PC-9 (cell line): ENCODE measurements at regions of chr13 and their contacts with region 1.

Region 1: DNA sequence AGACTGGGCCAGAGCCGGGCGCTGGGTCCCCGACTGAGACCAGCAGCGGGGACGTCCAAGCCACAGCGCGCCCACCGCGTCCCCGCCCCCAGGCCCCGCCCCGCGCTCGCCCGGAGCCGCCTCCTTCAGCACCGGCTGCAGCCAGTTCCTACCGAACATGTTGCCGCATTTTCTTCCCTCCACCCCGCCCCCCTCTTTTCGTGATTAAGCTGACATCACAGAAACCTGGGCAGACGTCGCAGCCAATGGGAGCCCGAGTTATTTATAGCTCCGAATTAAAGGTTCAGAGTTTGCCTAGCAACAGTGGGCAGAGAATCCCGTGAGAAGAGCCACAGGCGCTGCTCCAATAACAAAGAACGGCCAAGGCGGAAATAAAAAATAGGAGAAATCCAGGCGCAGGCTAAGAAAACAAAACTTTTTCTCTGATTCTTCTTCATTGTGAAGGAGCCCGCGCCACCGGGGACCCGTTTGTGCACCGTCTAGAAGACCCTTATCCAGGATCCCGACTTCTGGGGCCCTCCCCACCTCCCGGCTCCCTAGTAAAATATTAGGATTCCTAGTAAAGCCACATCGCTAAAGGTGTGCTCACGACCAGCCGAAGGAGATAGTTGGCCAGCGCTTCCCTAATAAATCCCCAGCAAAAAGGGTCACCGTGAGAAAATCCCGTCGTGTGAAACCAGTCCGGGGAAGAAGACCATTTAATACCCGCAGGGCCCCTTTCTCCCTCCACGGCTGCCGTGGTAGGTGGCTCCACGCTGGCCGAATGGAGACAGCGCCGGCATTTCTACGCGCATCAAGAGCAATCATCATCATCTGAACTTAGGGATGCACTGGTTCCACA is 61.7 kb downstream of the SERP2 start:
- DNase-seq: peak; percentile 87 to 90
- H3K4me3 ChIP-seq: peak overlapping the region; percentile 86
- H3K27ac ChIP-seq: peak overlapping the region; percentile 93
- H3K4me1 ChIP-seq: peaks cover 33% of the 10 kb centered on the region
- H3K27me3 ChIP-seq: no peaks in the 10 kb centered on the region
- CTCF ChIP-seq: no peak

Region 2: GRCh38 chr13:43905435-43906031 is 529.8 kb before region 1 on chr13:
- CTCF ChIA-PET with region 1: interaction called, 7 read pairs
- POLR2A ChIA-PET with region 1: no interaction called
- intact Hi-C with region 1: loop called (anchors 1 kb)
- DNase-seq: peak; percentile 9 to 62
- H3K4me3 ChIP-seq: no peak overlapping the region
- H3K27ac ChIP-seq: no peak overlapping the region
- H3K4me1 ChIP-seq: peaks cover 12% of the 10 kb centered on the region
- H3K27me3 ChIP-seq: no peaks in the 10 kb centered on the region
- CTCF ChIP-seq: peak; percentile 77

Region 3: GRCh38 chr13:44004878-44005277 is 430.5 kb before region 1 on chr13:
- CTCF ChIA-PET with region 1: no interaction called
- POLR2A ChIA-PET with region 1: interaction called, 10 read pairs
- intact Hi-C with region 1: no loop called
- DNase-seq: no peak
- H3K4me3 ChIP-seq: no peak overlapping the region
- H3K27ac ChIP-seq: no peak overlapping the region
- H3K4me1 ChIP-seq: no peaks in the 10 kb centered on the region
- H3K27me3 ChIP-seq: no peaks in the 10 kb centered on the region
- CTCF ChIP-seq: no peak

Region 4: DNA sequence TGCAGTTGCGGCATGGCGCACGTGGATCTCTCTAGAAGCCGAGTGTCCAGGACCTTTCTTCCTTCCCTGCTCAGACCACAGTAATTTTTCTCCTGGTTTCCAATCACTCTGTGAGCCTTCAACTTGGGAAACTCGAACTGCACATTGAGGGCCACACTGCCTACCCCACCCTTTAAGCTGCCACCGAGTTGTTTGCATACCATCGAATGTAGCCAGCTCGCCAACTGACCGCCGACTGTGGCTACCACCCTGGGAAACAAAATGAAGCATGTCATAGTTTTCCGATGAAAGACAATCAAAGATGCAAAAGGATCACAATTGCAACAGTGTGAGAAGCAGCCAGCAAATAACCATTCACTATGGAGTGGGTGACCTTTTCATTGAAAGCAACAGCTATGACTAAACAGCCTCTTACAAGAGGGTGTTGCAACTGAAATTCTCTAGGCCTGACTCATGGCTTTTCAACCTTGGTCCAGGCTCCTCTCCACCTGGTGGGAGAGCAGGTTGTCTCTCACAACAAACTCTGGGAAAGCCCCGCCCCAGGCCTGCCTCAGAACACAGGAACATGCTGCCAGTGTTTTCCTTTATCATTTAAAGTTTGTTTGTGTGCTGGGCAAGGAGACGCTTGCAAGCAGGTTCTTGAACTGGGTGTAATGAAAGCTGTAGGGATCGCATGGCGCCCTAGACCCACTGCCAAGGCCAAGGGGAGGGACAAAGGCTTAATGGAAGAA is 203.4 kb before region 1 on chr13:
- CTCF ChIA-PET with region 1: no interaction called
- POLR2A ChIA-PET with region 1: interaction called, 12 read pairs
- intact Hi-C with region 1: loop called (anchors 1 kb)
- DNase-seq: peak; percentile 89 to 98
- H3K4me3 ChIP-seq: no peak overlapping the region; the same call in 1 of the 2 replicates
- H3K27ac ChIP-seq: peak overlapping the region; percentile 99
- H3K4me1 ChIP-seq: peaks cover 40% of the 10 kb centered on the region
- H3K27me3 ChIP-seq: no peaks in the 10 kb centered on the region
- CTCF ChIP-seq: no peak

Region 5: GRCh38 chr13:44312898-44313551 is 122.3 kb before region 1 on chr13:
- CTCF ChIA-PET with region 1: no interaction called
- POLR2A ChIA-PET with region 1: interaction called, 16 read pairs
- intact Hi-C with region 1: loop called (anchors 2 kb)
- DNase-seq: peak; percentile 33 to 93
- H3K4me3 ChIP-seq: no peak overlapping the region
- H3K27ac ChIP-seq: peak overlapping the region; percentile 99
- H3K4me1 ChIP-seq: peaks cover 70% of the 10 kb centered on the region
- H3K27me3 ChIP-seq: no peaks in the 10 kb centered on the region
- CTCF ChIP-seq: no peak

Region 6: DNA sequence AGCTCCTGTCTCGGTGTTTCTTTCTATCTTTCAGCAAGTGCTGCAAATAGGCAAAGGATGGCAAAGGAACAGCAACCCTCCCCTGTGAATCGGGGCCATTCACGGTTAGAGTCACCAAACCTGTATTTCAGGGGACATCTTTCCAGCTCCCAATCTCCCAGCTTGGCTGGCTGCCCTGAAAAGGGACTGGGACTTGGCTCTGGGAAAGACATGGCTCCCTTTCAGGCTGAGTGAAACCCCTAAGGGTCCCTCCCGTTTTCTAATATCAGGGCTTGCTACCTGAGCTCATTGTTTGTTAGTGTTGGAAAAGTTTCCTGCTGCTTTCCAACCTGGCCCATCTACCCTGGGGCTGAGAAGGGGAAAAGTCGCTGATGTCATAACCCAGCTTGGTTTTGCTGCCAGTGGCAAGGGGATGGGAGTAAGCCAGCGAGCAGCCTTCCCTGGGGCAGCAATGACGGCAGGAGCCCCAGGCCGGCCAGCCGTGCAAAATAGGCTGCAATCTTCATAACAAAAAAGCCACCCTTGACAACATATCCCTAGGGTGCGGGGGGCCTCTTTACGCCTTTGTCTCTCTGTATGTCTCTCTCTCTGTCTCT is 31.8 kb before region 1 on chr13:
- CTCF ChIA-PET with region 1: no interaction called
- POLR2A ChIA-PET with region 1: interaction called, 19 read pairs
- intact Hi-C with region 1: no loop called
- DNase-seq: peak; percentile 61 to 69
- H3K4me3 ChIP-seq: peak overlapping the region; percentile 27; the same call in 1 of the 2 replicates
- H3K27ac ChIP-seq: peak overlapping the region; percentile 67
- H3K4me1 ChIP-seq: peaks cover 49% of the 10 kb centered on the region
- H3K27me3 ChIP-seq: no peaks in the 10 kb centered on the region
- CTCF ChIP-seq: no peak